Psoas muscle (tissue), 8 donors: ENCODE measurements at regions of chr6 and their contacts with region 1.

Region 1: DNA sequence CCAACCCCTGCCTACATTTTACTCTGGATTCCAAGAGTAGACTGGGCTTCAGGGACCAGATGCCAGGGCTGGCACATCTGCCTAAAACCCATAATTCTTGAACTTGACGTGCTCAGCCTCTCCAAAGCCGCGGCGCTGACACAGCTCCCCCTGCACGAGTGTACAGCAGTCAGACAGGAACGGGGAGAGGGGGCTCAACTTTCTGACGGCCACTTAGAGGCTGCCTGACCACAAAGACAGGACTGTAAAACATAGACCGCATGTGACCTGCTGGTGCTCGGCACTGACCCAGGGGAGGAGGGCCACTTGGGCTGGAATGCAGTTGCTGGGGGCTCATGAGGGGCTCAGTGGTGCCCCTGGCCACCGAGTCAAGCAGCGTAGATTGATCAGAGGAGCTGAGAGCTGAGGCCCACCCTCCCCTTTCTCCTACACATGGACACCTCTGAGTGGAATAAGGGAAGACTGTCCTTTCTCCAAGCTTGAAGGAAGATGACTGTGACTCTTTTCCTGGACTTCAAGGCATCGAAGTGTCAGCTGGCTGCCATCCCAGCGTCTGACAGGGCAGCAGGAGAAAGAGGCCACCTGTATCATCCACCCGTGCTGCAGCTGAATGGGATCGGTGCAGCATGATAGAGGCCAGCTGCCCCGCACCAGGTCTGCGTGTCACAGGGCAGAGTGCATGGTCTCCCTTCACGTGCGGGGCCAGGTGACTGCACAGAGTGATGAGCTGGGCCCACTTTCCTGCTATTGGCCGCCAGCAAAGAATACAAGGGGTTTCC is 171.3 kb upstream of the AGPAT4 start:
- DNase-seq: peak in 1 of 2 donors; percentile 62
- ATAC-seq: peak; percentile 63 to 79 (median 76)
- H3K4me3 ChIP-seq: peak overlapping the region; percentile 36
- H3K27ac ChIP-seq: peak overlapping the region; percentile 76
- H3K4me1 ChIP-seq: peaks cover 8% of the 10 kb centered on the region
- H3K27me3 ChIP-seq: no peaks in the 10 kb centered on the region
- CTCF ChIP-seq: no peak

Region 2: GRCh38 chr6:160863782-160864181 is 581.4 kb before region 1 on chr6:
- intact Hi-C with region 1: no loop called
- DNase-seq: no peak
- ATAC-seq: no peak
- H3K4me3 ChIP-seq: no peak overlapping the region
- H3K27ac ChIP-seq: no peak overlapping the region
- H3K4me1 ChIP-seq: no peaks in the 10 kb centered on the region
- H3K27me3 ChIP-seq: peaks cover 0 to 2% (median 0%) of the 10 kb centered on the region in 3 donors
- CTCF ChIP-seq: no peak

Region 3: GRCh38 chr6:161482517-161482858 is 37.3 kb after region 1 on chr6:
- intact Hi-C with region 1: loop called in 1 of 2 experiments (anchors 5 kb)
- DNase-seq: no peak
- ATAC-seq: no peak
- H3K4me3 ChIP-seq: no peak overlapping the region
- H3K27ac ChIP-seq: peak overlapping the region; percentile 25
- H3K4me1 ChIP-seq: peaks cover 25% of the 10 kb centered on the region
- H3K27me3 ChIP-seq: no peaks in the 10 kb centered on the region
- CTCF ChIP-seq: no peak

Region 4: DNA sequence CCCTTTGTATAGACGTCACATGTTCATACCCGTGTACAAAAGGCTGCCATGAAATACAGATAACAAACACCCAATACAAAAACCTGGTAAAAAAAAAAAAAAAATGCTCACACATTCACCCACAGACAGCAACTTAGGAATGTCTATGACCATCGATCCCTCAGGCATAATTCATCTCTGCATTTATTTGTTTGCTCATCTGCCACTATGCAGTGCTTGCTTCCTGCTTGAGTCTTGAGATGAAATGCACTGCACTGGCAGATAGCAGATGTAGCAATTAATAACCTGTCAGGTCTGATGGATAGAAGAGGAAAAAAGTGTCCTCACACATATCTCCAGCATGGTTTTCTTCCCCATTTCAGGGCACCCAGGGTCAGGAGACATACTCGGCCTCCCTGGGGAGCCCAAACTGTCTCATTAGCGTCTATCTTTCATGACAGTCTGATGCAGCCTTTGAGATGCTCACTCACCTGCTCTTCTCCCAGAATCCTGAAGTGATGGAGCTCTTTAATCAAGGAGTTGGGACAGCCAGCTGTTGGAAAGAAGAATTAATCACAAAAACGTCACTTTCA is 123.8 kb after region 1 on chr6:
- intact Hi-C with region 1: no loop called
- DNase-seq: no peak
- ATAC-seq: no peak
- H3K4me3 ChIP-seq: no peak overlapping the region
- H3K27ac ChIP-seq: no peak overlapping the region
- H3K4me1 ChIP-seq: no peaks in the 10 kb centered on the region
- H3K27me3 ChIP-seq: no peaks in the 10 kb centered on the region
- CTCF ChIP-seq: no peak